Tibial artery (tissue), 4 donors: ENCODE measurements at regions of chr1 and their contacts with region 1.

Region 1: GRCh38 chr1:14945132-14946016 is 208.2 kb upstream of the TMEM51 start:
- DNase-seq: peak in 1 of 2 donors; percentile 83
- H3K4me3 ChIP-seq: peak overlapping the region; percentile 27 to 45
- H3K27ac ChIP-seq: peak overlapping the region; percentile 86 to 87
- H3K4me1 ChIP-seq: peaks cover 6 to 80% (median 60%) of the 10 kb centered on the region in 4 donors
- H3K27me3 ChIP-seq: no peaks in the 10 kb centered on the region
- CTCF ChIP-seq: no peak

Region 2: GRCh38 chr1:14634486-14634885 is 310.9 kb before region 1 on chr1:
- intact Hi-C with region 1: no loop called
- DNase-seq: no peak
- H3K4me3 ChIP-seq: no peak overlapping the region
- H3K27ac ChIP-seq: no peak overlapping the region
- H3K4me1 ChIP-seq: no peaks in the 10 kb centered on the region
- H3K27me3 ChIP-seq: peaks cover 0 to 20% of the 10 kb centered on the region in 2 donors
- CTCF ChIP-seq: no peak

Region 3: GRCh38 chr1:14787604-14788003 is 157.8 kb before region 1 on chr1:
- intact Hi-C with region 1: no loop called
- DNase-seq: no peak
- H3K4me3 ChIP-seq: no peak overlapping the region
- H3K27ac ChIP-seq: no peak overlapping the region
- H3K4me1 ChIP-seq: no peaks in the 10 kb centered on the region
- H3K27me3 ChIP-seq: peaks cover 0 to 8% of the 10 kb centered on the region in 2 donors
- CTCF ChIP-seq: no peak

Region 4: GRCh38 chr1:14923727-14924452 is 21.5 kb before region 1 on chr1:
- intact Hi-C with region 1: loop called (anchors 2 kb)
- DNase-seq: peak; percentile 61 to 87
- H3K4me3 ChIP-seq: peak overlapping the region; percentile 68 to 69
- H3K27ac ChIP-seq: peak overlapping the region; percentile 53 to 76
- H3K4me1 ChIP-seq: peaks cover 0 to 32% (median 15%) of the 10 kb centered on the region in 4 donors
- H3K27me3 ChIP-seq: no peaks in the 10 kb centered on the region
- CTCF ChIP-seq: no peak

Region 5: GRCh38 chr1:15062479-15063099 is 117.2 kb after region 1 on chr1:
- intact Hi-C with region 1: no loop called
- DNase-seq: no peak
- H3K4me3 ChIP-seq: no peak overlapping the region
- H3K27ac ChIP-seq: no peak overlapping the region
- H3K4me1 ChIP-seq: peaks cover 0 to 10% (median 5%) of the 10 kb centered on the region in 4 donors
- H3K27me3 ChIP-seq: no peaks in the 10 kb centered on the region
- CTCF ChIP-seq: peak; percentile 30 to 42

Region 6: DNA sequence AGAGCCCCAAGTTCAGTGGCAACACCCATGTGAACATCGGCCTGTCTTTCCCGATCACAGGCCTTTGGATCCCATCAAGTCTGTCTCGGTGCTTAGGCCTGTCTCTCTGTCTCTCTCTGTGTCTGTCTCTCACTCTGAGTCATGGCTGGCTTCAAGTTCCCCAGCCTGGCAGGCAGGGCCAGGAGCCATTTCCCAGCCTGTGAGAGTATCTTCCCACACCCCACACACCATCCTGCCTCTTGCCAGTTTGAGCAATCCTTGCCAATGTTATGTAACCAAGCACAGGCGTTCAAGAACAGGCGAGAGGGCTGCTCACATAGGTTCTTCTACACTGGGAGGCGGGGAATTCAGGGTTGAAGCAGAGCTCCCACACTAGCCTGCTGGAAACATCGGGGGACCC is 138.2 kb after region 1 on chr1:
- intact Hi-C with region 1: no loop called
- DNase-seq: no peak
- H3K4me3 ChIP-seq: no peak overlapping the region
- H3K27ac ChIP-seq: no peak overlapping the region
- H3K4me1 ChIP-seq: peaks cover 0 to 8% (median 3%) of the 10 kb centered on the region in 4 donors
- H3K27me3 ChIP-seq: no peaks in the 10 kb centered on the region
- CTCF ChIP-seq: no peak